ENCODE measurements at regions of chr11 and their contacts with region 1.

Region 1: DNA sequence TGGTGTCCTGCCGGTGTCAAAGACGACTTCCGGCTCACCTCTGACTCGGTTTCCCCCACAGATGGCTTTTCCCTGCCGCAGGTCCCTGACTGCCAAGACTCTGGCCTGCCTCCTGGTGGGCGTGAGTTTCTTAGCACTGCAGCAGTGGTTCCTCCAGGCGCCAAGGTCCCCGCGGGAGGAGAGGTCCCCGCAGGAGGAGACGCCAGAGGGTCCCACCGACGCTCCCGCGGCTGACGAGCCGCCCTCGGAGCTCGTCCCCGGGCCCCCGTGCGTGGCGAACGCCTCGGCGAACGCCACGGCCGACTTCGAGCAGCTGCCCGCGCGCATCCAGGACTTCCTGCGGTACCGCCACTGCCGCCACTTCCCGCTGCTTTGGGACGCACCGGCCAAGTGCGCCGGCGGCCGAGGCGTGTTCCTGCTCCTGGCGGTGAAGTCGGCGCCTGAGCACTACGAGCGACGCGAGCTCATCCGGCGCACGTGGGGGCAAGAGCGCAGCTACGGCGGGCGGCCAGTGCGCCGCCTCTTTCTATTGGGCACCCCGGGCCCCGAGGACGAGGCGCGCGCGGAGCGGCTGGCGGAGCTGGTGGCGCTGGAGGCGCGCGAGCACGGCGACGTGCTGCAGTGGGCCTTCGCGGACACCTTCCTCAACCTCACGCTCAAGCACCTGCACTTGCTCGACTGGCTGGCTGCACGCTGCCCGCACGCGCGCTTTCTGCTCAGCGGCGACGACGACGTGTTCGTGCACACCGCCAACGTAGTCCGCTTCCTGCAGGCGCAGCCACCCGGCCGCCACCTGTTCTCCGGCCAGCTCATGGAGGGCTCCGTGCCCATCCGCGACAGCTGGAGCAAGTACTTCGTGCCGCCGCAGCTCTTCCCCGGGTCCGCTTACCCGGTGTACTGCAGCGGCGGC is 5.5 kb downstream of the B3GNT6 start:
- DNase-seq: peak; percentile 49
- CTCF ChIP-seq: peak; percentile 58

Region 2: GRCh38 chr11:77003954-77004353 is 35.8 kb before region 1 on chr11:
- CTCF ChIA-PET with region 1: no interaction called
- POLR2A ChIA-PET with region 1: no interaction called
- DNase-seq: no peak
- CTCF ChIP-seq: no peak

Region 3: DNA sequence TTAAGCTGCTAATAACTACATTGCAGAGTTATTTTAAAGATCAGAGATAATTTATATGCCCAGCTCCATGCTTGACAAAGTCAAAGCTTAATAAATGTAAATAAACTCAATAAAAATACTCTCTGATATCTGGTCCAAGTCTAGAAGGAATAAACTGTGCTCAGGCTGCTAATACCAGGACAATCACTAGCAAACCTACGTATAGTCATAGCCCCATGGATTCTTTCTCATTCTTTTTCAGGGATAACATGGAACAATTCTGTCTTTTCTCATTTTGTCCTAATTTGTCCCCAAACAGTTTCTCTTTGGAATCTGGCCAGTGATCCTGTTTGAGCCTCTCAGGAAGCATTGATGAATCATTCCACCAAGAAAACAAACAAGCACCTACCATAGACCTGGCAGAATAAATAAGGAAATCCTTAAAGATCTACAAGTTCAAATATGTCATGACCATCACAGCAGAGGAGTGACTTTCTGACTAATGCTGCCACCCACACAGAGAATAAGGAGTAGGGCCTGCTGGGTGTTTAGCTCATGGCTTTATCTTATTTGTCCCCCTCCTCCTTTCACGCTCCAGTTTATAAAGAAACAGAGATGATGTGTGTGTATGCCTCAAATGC is 19.7 kb before region 1 on chr11:
- CTCF ChIA-PET with region 1: interaction called, 10 read pairs
- POLR2A ChIA-PET with region 1: no interaction called
- DNase-seq: no peak
- CTCF ChIP-seq: no peak

Region 4: GRCh38 chr11:77113382-77114088 is 73.8 kb after region 1 on chr11:
- CTCF ChIA-PET with region 1: no interaction called
- POLR2A ChIA-PET with region 1: no interaction called
- DNase-seq: peak; percentile 53
- CTCF ChIP-seq: no peak